ENCODE measurements at regions of chr7 and their contacts with region 1.

Region 1: DNA sequence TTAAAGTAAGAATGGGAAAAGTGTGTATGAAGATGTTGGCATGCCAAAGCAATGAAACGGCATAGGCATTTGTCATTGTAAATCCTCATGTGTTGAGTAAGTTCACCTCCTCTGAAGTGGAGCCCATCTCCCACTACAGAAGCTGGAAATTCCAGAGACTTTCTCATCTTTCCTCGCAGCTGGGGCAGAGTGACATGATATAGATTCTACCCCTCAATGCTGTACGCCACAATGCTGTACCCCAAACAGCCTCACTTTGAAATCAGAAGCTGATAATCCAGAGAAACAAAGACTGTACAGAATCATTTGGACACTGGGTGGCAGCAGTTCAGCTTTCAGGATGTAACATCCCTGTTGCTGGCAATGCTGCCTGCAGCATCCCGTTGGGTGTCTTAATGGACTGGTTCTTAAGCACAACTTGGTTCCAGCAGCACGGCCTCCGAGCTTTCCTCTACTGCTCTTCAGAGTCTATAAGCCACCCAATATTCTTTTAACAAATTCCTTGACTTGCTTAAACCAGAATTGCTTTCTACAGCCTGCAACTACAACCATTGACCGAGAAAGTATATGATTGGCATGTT is 18.8 kb downstream of the ZC3HAV1L start:
- DNase-seq: peak; percentile 81
- CTCF ChIP-seq: peak; percentile 62

Region 2: GRCh38 chr7:138785587-138786437 is 231.2 kb before region 1 on chr7:
- CTCF ChIA-PET with region 1: no interaction called
- POLR2A ChIA-PET with region 1: no interaction called
- DNase-seq: no peak
- CTCF ChIP-seq: no peak

Region 3: DNA sequence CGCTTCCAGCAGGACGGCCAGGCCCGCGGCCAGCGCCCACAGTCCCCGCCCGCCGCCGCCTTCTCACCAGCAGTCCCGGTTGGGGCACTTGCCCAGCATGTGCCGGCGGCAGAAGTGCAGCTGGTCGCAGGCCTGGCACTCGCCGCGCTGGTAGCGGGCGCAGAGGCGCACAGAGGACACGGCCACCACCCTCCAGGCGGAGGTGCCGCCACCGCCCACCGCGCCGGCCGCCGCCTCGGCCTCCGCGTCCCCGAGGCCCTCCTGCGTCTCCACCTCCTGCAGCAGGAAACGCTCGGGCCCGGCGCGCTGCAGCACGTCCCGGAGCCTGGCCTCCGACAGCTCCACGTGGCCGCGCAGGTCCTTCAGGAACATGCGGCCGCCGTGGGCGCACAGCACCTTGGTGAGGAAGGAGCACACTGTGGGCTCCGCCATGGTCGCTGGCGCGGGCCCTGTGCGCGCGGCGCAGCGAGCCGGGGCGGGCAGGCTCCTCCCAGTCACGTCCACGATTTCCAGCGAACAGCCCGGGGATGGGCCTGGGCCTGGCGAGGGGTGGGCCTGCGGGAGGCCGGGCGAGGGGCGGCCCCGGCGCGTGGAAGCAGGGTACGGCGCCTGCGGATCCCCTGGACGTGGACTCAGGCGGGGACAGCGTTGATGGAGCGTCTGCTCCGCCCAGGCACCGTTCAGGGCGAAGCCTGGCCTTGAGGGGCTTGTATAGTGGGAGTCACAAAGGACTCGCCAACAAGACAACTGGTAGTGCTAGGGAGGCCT is 18.7 kb after region 1 on chr7 and contains the start of gene ZC3HAV1L:
- CTCF ChIA-PET with region 1: interaction called, 19 read pairs
- POLR2A ChIA-PET with region 1: no interaction called
- DNase-seq: peak; percentile 88
- CTCF ChIP-seq: no peak

Region 4: DNA sequence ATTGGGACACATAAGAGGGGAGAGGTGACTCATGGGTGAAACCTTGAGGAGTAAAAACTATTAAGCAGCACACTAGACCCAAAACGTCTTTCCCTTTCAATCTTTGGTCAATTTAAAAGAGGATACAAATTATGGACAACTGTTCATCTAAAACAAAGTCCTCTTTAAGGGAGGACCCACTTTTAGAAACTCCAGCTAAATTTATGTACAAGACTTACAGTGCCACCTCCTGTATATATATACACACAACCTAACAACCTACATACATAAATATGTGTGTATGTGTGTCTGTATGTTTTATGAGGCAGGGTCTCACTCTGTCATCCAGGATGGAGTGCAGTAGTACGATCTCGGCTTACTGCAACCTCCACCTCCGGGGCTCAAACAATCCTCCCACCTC is 110.6 kb after region 1 on chr7:
- CTCF ChIA-PET with region 1: interaction called, 11 read pairs
- POLR2A ChIA-PET with region 1: no interaction called
- DNase-seq: no peak
- CTCF ChIP-seq: peak; percentile 14

Measured in GM10248 (cell line).